ENCODE measurements at regions of chr9 and their contacts with region 1.

Region 1: GRCh38 chr9:97403746-97404316 is 8.1 kb upstream of the TDRD7 start:
- DNase-seq: no peak
- ATAC-seq: no peak
- H3K4me3 ChIP-seq: no peak overlapping the region
- H3K27ac ChIP-seq: no peak overlapping the region
- H3K4me1 ChIP-seq: no peaks in the 10 kb centered on the region
- H3K27me3 ChIP-seq: no peaks in the 10 kb centered on the region
- CTCF ChIP-seq: no peak

Region 2: DNA sequence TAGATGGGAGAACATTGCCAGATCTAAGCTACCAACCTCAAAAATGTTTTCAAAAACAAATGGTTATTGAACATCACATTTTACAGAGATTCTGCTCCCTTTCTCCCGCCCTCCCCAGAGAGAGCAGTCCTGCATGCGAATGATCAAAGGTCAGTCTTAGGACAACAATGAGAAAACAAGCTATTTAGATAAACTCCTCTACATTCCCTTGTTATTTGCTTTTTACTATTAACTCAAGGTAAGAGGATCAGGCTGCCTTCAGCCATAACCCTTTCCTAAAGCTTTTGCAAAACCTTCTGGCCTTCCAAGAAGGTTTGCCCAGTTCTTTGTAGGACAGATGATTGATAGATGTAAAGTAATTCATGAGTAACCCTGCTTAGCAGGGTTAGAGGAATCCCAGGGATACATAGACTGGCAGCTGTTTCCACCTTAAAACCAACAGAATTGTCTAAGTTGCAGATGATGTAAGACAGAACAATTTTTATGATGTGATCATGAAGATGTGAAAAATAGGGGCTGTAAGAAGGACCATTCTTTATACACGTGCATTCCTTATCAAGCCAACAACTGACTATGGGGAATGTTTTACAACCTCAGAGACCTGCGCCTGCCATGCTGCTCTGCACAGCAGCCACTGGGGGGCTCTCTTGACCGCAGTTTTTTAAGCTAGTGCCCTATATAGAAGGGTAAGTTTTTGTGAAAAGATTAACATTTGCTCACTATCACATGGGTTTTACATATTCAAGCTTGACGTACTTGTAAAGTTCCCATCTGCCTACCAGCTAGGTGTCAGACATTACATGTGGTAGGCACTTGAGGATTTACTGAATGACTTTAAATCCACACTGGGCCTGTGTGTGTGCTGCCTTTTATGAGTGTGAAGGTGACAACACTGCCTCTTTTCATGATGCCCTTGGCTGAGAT is 547.2 kb before region 1 on chr9:
- intact Hi-C with region 1: loop called (anchors 5 kb)
- DNase-seq: peak; percentile 65
- ATAC-seq: peak; percentile 74 to 81
- H3K4me3 ChIP-seq: no peak overlapping the region
- H3K27ac ChIP-seq: no peak overlapping the region
- H3K4me1 ChIP-seq: peaks cover 27% of the 10 kb centered on the region
- H3K27me3 ChIP-seq: no peaks in the 10 kb centered on the region
- CTCF ChIP-seq: peak; percentile 93